ENCODE measurements at regions of chr1 and their contacts with region 1.

Region 1: GRCh38 chr1:19398309-19398760 is 86.2 kb downstream of the SLC66A1 start:
- DNase-seq: peak; percentile 29
- H3K4me3 Mint-ChIP-seq: no peak overlapping the region
- H3K27ac Mint-ChIP-seq: no peak overlapping the region
- H3K4me1 Mint-ChIP-seq: peaks cover 21% of the 10 kb centered on the region
- H3K27me3 Mint-ChIP-seq: no peaks in the 10 kb centered on the region
- CTCF ChIP-seq: no peak

Region 2: GRCh38 chr1:19128968-19129514 is 269.3 kb before region 1 on chr1:
- CTCF ChIA-PET with region 1: no interaction called
- POLR2A ChIA-PET with region 1: no interaction called
- intact Hi-C with region 1: no loop called
- DNase-seq: no peak
- H3K4me3 Mint-ChIP-seq: no peak overlapping the region
- H3K27ac Mint-ChIP-seq: no peak overlapping the region
- H3K4me1 Mint-ChIP-seq: no peaks in the 10 kb centered on the region
- H3K27me3 Mint-ChIP-seq: no peaks in the 10 kb centered on the region
- CTCF ChIP-seq: no peak

Region 3: DNA sequence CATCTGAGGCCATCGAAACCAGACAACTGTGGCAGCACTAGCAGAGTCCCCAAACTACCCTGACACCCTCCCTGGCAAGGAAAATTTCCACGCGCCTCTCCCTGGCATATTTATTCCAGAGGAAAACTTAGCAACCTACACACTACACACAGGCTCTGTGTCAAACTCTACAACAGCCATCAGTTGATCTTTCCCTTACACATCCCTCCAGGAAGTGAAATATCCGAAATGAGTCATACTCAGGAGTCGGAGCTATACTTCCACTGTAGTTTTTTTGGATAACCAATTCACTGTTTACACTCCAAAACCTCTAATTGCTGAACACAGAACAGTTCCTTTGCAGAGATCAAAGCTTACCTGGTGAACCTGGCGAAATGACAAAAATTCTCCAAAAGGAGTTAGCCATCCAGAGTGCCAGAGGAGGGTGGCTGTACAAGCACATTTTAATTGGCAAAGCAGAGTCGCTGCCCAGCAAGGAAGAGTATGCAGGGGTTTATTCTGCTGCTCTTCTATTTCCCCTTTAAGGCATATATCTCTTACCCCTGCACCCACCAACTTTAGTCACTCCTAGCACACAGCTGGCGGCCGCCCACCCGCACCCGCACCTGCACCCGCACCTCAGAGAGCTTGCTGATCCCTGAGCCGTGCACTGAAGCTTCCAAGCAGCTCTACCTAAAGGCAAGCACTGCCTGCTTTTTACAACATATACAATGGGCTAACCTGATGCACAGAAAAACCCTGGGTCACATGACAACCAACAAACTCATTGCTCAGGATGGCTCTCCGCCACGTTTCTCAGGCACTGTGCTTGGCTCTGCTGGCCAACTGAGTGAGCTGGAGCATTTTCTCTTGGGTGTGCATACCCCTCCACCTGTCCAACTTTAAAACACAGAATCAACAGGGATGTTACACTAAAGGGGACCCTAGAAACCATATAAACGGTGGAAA is 32.1 kb after region 1 on chr1:
- CTCF ChIA-PET with region 1: no interaction called
- POLR2A ChIA-PET with region 1: interaction called, 4 read pairs
- intact Hi-C with region 1: loop called (anchors 5 kb)
- DNase-seq: peak; percentile 70
- H3K4me3 Mint-ChIP-seq: peak overlapping the region; percentile 10
- H3K27ac Mint-ChIP-seq: peak overlapping the region; percentile 25
- H3K4me1 Mint-ChIP-seq: peaks cover 36% of the 10 kb centered on the region
- H3K27me3 Mint-ChIP-seq: no peaks in the 10 kb centered on the region
- CTCF ChIP-seq: no peak

Region 4: GRCh38 chr1:19582302-19582701 is 184.0 kb after region 1 on chr1:
- CTCF ChIA-PET with region 1: no interaction called
- POLR2A ChIA-PET with region 1: no interaction called
- intact Hi-C with region 1: loop called (anchors 1 kb)
- DNase-seq: peak; percentile 71
- H3K4me3 Mint-ChIP-seq: no peak overlapping the region
- H3K27ac Mint-ChIP-seq: no peak overlapping the region
- H3K4me1 Mint-ChIP-seq: no peaks in the 10 kb centered on the region
- H3K27me3 Mint-ChIP-seq: peaks cover 16% of the 10 kb centered on the region
- CTCF ChIP-seq: peak; percentile 57

Measured in MCF 10A (cell line).